ENCODE measurements at regions of chr10 and their contacts with region 1.

Region 1: GRCh38 chr10:100743626-100744135 is 1.7 kb upstream of the PAX2 start:
- DNase-seq: no peak
- ATAC-seq: peak; percentile 58
- H3K4me3 Mint-ChIP-seq: peak overlapping the region; percentile 53
- H3K27ac Mint-ChIP-seq: no peak overlapping the region
- H3K4me1 Mint-ChIP-seq: peaks cover 52% of the 10 kb centered on the region
- H3K27me3 Mint-ChIP-seq: peaks cover 64% of the 10 kb centered on the region
- CTCF ChIP-seq: no peak

Region 2: DNA sequence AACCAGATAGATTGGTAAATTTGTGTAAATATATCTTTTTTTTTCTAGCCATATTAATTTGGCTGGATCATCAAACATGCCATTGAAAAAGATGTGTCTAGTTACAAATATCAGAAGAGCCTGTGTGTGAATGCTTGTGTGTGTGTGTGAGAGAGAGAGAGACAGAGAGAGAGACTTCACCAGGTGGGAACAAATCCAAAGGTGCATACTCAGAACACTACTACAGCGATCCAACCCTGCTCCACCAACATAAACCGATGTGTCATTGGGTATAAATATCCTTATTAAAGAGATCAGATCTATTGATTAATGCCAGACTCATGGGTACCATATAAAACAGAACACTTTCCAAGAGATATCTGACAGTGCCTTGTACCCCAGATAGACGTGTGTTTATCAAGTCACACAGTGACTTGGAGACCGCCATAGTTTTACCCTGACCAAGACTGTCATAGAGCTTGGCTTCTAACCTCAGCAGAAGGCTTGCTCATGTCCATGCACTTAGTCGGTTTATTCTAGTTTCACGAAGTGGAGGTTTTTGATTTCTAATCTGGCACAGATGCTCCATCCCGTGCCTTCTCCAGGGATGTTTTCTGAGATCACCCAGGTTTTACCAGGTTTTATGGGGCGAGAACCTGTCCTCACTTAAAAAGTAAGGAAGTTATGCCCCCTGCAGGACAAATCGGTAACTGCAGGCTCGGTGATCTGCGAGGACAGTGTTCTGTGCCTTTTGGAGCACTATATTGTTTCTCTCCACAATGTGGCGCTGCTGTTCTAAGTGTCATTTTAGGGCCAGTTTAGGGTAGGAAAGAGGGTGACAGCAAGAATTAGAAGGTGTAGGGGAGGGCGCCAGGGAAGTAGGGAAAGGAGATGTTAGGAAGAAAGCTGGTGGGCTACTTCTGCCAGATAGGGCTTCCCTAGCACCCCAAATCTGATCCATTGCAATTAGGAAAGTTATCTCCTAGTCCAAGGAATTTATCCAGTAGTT is 310.1 kb before region 1 on chr10:
- CTCF ChIA-PET with region 1: no interaction called
- POLR2A ChIA-PET with region 1: no interaction called
- intact Hi-C with region 1: loop called (anchors 10 kb)
- DNase-seq: peak; percentile 80
- ATAC-seq: peak; percentile 99
- H3K4me3 Mint-ChIP-seq: no peak overlapping the region
- H3K27ac Mint-ChIP-seq: no peak overlapping the region
- H3K4me1 Mint-ChIP-seq: no peaks in the 10 kb centered on the region
- H3K27me3 Mint-ChIP-seq: peaks cover 8% of the 10 kb centered on the region
- CTCF ChIP-seq: peak; percentile 99

Region 3: GRCh38 chr10:100653957-100654781 is 89.5 kb before region 1 on chr10:
- CTCF ChIA-PET with region 1: no interaction called
- POLR2A ChIA-PET with region 1: no interaction called
- intact Hi-C with region 1: loop called (anchors 5 kb)
- DNase-seq: no peak
- ATAC-seq: peak; percentile 28
- H3K4me3 Mint-ChIP-seq: peak overlapping the region; percentile 70
- H3K27ac Mint-ChIP-seq: no peak overlapping the region
- H3K4me1 Mint-ChIP-seq: peaks cover 25% of the 10 kb centered on the region
- H3K27me3 Mint-ChIP-seq: peaks cover 62% of the 10 kb centered on the region
- CTCF ChIP-seq: no peak

Region 4: GRCh38 chr10:100730725-100731406 is 12.8 kb before region 1 on chr10:
- CTCF ChIA-PET with region 1: interaction called, 3 read pairs
- POLR2A ChIA-PET with region 1: no interaction called
- intact Hi-C with region 1: loop called (anchors 2 kb)
- DNase-seq: no peak
- ATAC-seq: peak; percentile 85
- H3K4me3 Mint-ChIP-seq: peak overlapping the region; percentile 78
- H3K27ac Mint-ChIP-seq: no peak overlapping the region
- H3K4me1 Mint-ChIP-seq: peaks cover 28% of the 10 kb centered on the region
- H3K27me3 Mint-ChIP-seq: peaks cover 78% of the 10 kb centered on the region
- CTCF ChIP-seq: no peak

Region 5: GRCh38 chr10:100791369-100792058 is 47.8 kb after region 1 on chr10:
- CTCF ChIA-PET with region 1: no interaction called
- POLR2A ChIA-PET with region 1: no interaction called
- intact Hi-C with region 1: no loop called
- DNase-seq: no peak
- ATAC-seq: no peak
- H3K4me3 Mint-ChIP-seq: no peak overlapping the region
- H3K27ac Mint-ChIP-seq: no peak overlapping the region
- H3K4me1 Mint-ChIP-seq: no peaks in the 10 kb centered on the region
- H3K27me3 Mint-ChIP-seq: peaks cover 34% of the 10 kb centered on the region
- CTCF ChIP-seq: no peak

Region 6: GRCh38 chr10:100878291-100878910 is 134.7 kb after region 1 on chr10:
- CTCF ChIA-PET with region 1: no interaction called
- POLR2A ChIA-PET with region 1: no interaction called
- intact Hi-C with region 1: loop called (anchors 10 kb)
- DNase-seq: no peak
- ATAC-seq: peak; percentile 77
- H3K4me3 Mint-ChIP-seq: no peak overlapping the region
- H3K27ac Mint-ChIP-seq: no peak overlapping the region
- H3K4me1 Mint-ChIP-seq: no peaks in the 10 kb centered on the region
- H3K27me3 Mint-ChIP-seq: peaks cover 11% of the 10 kb centered on the region
- CTCF ChIP-seq: no peak

Region 7: DNA sequence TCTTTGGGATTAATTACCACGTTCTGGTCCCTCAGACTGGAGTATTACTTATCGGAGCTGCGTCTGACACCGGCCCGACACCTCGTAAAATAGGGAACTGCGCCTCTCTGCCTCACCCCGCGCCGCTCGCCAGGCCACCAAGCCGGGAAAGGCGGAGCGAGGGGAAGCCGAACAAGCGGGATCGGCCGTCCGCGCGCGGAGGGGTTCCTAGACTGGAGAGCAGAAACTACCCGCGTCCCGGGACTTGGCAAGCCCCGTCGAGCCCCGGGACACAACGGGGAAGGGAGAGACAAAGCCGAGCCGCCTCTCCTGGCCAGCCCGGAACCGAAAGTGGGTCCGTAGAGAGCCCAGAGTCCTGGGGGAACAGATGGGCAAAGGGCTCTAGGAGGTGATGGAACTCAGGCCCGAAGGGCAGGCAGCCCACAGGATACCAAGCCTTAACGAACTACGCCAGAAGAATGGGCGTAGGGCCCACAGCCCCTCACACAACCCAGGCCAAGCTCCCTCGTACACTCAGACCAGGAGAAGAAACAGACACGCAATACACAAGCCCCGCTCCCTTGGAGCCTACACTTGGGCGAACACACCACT is 479.1 kb after region 1 on chr10:
- CTCF ChIA-PET with region 1: no interaction called
- POLR2A ChIA-PET with region 1: interaction called, 12 read pairs
- intact Hi-C with region 1: loop called (anchors 5 kb)
- DNase-seq: no peak
- ATAC-seq: peak; percentile 25
- H3K4me3 Mint-ChIP-seq: peak overlapping the region; percentile 70
- H3K27ac Mint-ChIP-seq: no peak overlapping the region
- H3K4me1 Mint-ChIP-seq: peaks cover 43% of the 10 kb centered on the region
- H3K27me3 Mint-ChIP-seq: peaks cover 73% of the 10 kb centered on the region
- CTCF ChIP-seq: no peak